Activated CD8-positive, alpha-beta memory T cell treated with anti-CD3 and anti-CD28 coated beads, Interleukin-2, amount 10 ng/mL, durations not matched to agents 7 days and 5 days (primary cell): ENCODE measurements at regions of chr12 and their contacts with region 1.

Region 1: GRCh38 chr12:50111693-50112455 is at the start of gene COX14:
- DNase-seq: peak; percentile 100
- ATAC-seq: peak; percentile 90
- H3K4me3 Mint-ChIP-seq: peak within 1 kb of the TSS; percentile 100
- H3K27ac Mint-ChIP-seq: peak within 1 kb of the TSS; percentile 99
- H3K4me1 Mint-ChIP-seq: peaks cover 36% of the 10 kb centered on the region
- H3K27me3 Mint-ChIP-seq: no peaks in the 10 kb centered on the region
- total RNA-seq, gene COX14: 55.1 to 64.5 TPM

Region 2: GRCh38 chr12:50038336-50038735 is 73.5 kb before region 1 on chr12:
- CTCF ChIA-PET with region 1: interaction called, 14 read pairs
- DNase-seq: no peak
- ATAC-seq: no peak
- H3K4me3 Mint-ChIP-seq: no peak overlapping the region
- H3K27ac Mint-ChIP-seq: no peak overlapping the region
- H3K4me1 Mint-ChIP-seq: peaks cover 4% of the 10 kb centered on the region
- H3K27me3 Mint-ChIP-seq: peaks cover 15% of the 10 kb centered on the region

Region 3: GRCh38 chr12:50084775-50085614 is 26.9 kb before region 1 on chr12 and contains the start of gene SMARCD1:
- CTCF ChIA-PET with region 1: interaction called, 58 read pairs
- DNase-seq: peak; percentile 90
- ATAC-seq: peak; percentile 86
- H3K4me3 Mint-ChIP-seq: peak within 1 kb of the TSS; percentile 88
- H3K27ac Mint-ChIP-seq: peak within 1 kb of the TSS; percentile 95
- H3K4me1 Mint-ChIP-seq: peaks cover 38% of the 10 kb centered on the region
- H3K27me3 Mint-ChIP-seq: no peaks in the 10 kb centered on the region
- total RNA-seq, gene SMARCD1: 62.0 to 80.8 TPM

Region 4: GRCh38 chr12:50132505-50133135 is 20.7 kb after region 1 on chr12:
- CTCF ChIA-PET with region 1: interaction called, 25 read pairs
- DNase-seq: no peak
- ATAC-seq: no peak
- H3K4me3 Mint-ChIP-seq: no peak overlapping the region
- H3K27ac Mint-ChIP-seq: peak overlapping the region; percentile 56
- H3K4me1 Mint-ChIP-seq: peaks cover 9% of the 10 kb centered on the region
- H3K27me3 Mint-ChIP-seq: no peaks in the 10 kb centered on the region

Region 5: GRCh38 chr12:50174971-50175715 is 63.3 kb after region 1 on chr12:
- CTCF ChIA-PET with region 1: interaction called, 50 read pairs
- DNase-seq: no peak
- ATAC-seq: no peak
- H3K4me3 Mint-ChIP-seq: no peak overlapping the region
- H3K27ac Mint-ChIP-seq: no peak overlapping the region
- H3K4me1 Mint-ChIP-seq: no peaks in the 10 kb centered on the region
- H3K27me3 Mint-ChIP-seq: no peaks in the 10 kb centered on the region

Region 6: DNA sequence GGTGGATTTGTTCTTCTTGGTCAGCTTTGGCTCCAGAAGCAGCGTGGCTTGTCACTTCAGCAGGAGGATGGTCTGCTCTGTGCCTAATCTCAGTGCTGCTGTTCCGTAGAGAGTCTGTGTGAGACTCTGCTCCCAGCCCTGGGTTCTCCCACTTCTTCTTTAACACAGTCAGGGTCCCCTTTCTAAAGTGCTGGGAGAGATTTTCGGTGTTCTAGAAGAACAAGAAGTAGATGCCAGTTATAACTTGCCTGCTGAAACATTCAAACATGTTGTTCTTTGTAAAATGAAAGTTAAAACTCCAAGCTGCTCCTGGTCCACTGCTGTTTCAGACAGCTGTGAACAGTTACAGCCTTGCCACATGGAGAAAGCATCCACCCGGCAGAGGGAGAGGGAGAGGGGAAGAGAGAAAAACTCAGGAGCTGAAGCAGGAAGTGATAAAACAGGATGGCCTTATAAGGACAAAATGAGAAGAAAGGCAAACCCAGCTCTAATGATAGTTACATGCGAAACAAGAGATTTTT is 110.5 kb after region 1 on chr12:
- CTCF ChIA-PET with region 1: interaction called, 15 read pairs
- DNase-seq: peak; percentile 54
- ATAC-seq: peak; percentile 56
- H3K4me3 Mint-ChIP-seq: no peak overlapping the region
- H3K27ac Mint-ChIP-seq: no peak overlapping the region
- H3K4me1 Mint-ChIP-seq: peaks cover 36% of the 10 kb centered on the region
- H3K27me3 Mint-ChIP-seq: no peaks in the 10 kb centered on the region